HEK293 (cell line): ENCODE measurements at regions of chr4 and their contacts with region 1.

Region 1: GRCh38 chr4:41142376-41143310 is 71.7 kb downstream of the APBB2 start:
- H3K4me3 ChIP-seq: no peak overlapping the region
- H3K27ac ChIP-seq: no peak overlapping the region
- H3K4me1 ChIP-seq: peaks cover 10% of the 10 kb centered on the region
- CTCF ChIP-seq: no peak

Region 2: DNA sequence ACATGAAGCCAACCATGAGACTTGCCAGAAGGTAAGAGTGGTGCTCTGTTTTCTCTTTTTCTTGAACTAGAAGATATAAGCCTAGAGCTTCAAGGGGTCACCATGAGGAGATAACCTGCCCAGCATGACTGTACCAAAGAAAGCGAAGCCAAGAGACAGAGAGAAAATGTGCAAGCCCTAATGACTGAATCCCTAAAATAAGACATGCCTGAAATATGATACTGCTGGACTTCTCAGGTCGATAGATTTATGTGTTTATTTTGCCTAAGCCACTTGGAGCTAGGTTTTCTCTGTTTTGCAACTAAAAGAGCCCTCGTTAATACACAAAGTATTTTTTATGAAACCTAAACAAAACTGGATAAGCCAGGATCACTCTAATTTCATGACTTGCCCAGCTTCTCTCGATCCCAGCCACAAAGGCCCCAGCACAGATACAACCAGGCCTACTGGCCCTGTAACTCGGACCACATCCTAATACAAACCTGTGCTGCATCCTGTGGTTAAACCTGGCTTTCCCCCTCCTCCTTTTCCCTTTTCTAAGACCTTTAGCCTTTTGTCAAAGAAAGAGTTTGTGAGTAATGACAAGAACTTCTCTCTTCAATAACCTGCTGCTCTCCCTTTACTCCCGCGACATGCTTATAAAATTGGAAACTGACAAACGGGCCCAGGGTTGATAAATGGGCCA is 114.1 kb before region 1 on chr4:
- CTCF ChIA-PET with region 1: no interaction called
- POLR2A ChIA-PET with region 1: interaction called, 10 read pairs
- H3K4me3 ChIP-seq: no peak overlapping the region
- H3K27ac ChIP-seq: peak overlapping the region; percentile 66
- H3K4me1 ChIP-seq: peaks cover 4% of the 10 kb centered on the region; the same call in 1 of the 2 replicates
- CTCF ChIP-seq: no peak

Region 3: DNA sequence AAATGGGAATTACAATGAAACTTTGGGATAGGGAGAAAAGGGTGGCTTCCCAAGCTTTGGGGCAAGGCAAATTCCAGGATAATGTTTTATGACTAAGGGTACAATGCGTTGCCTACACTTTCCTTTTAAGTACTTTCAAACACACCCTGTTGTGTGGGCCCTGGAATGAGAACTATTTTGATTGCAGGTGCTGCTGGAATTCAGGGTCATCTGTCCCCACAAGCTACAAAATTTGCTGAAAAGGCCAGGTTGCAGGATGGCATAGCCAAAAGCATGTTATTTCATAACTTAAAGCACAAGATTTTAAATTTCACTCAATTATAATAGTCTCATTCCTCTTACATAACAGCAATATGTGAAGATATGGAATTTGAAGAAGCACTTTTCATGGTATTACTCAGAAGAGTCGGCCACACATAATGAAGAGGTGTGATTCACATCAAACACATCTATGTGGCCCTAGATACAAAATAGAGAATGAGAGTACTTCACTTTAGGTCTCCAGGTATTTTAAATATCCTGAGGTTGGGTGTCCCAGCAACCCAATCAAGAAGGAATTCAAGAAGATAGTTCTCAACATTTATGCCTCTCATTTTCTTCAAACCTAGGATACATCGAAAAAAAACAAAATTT is 17.6 kb before region 1 on chr4:
- CTCF ChIA-PET with region 1: no interaction called
- POLR2A ChIA-PET with region 1: no interaction called
- H3K4me3 ChIP-seq: no peak overlapping the region
- H3K27ac ChIP-seq: no peak overlapping the region
- H3K4me1 ChIP-seq: peaks cover 13% of the 10 kb centered on the region
- CTCF ChIP-seq: no peak